ENCODE measurements at regions of chr12 and their contacts with region 1.

Region 1: GRCh38 chr12:110647631-110648040 is 33.7 kb downstream of the TCTN1 start:
- DNase-seq: peak; percentile 56
- ATAC-seq: peak; percentile 82
- H3K4me3 Mint-ChIP-seq: peak overlapping the region; percentile 45
- H3K27ac Mint-ChIP-seq: peak overlapping the region; percentile 89
- H3K4me1 Mint-ChIP-seq: peaks cover 96% of the 10 kb centered on the region
- H3K27me3 Mint-ChIP-seq: no peaks in the 10 kb centered on the region
- CTCF ChIP-seq: no peak

Region 2: DNA sequence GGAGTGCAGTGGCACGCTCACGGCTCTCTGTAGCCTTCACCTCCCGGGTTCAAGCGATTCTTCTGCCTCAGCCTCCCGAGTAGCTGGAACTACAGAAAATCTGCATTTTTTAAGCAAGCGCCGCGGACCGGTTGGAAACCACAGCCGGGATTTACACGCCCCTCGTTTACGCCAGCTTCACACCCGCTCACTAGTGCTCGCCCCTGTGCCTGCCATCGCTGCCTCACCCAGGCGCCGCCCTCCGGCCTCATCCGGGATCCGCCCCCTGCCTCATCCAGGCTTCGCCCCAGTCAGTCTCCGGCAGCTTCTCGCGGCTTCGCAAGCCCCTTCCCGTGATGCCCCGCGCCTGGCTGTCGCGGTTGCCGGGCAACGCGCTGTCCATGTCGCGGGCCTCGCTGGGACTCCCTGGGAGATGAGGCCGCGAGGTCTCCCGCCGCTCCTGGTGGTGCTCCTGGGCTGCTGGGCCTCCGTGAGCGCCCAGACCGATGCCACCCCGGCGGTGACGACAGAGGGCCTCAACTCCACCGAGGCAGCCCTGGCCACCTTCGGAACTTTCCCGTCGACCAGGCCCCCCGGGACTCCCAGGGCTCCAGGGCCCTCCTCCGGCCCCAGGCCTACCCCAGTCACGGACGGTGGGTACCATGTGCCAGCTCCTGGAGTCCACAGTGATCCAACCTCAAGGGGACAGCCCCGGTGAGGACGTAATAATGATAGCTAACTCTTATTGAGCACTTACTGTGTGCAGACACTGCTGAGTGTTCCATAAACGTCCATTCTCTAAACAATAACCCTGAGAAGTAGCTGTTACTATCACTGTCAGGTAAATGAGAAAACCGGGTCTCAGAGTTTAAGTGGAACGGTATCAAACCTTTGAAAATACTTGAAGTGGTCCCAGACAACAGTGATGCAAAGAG is 33.6 kb before region 1 on chr12 and contains the start of gene TCTN1:
- CTCF ChIA-PET with region 1: interaction called, 3 read pairs
- POLR2A ChIA-PET with region 1: interaction called, 20 read pairs
- intact Hi-C with region 1: loop called (anchors 5 kb)
- DNase-seq: peak; percentile 95
- ATAC-seq: peak; percentile 98
- H3K4me3 Mint-ChIP-seq: peak within 1 kb of the TSS; percentile 89
- H3K27ac Mint-ChIP-seq: peak within 1 kb of the TSS; percentile 94
- H3K4me1 Mint-ChIP-seq: peaks cover 57% of the 10 kb centered on the region
- H3K27me3 Mint-ChIP-seq: no peaks in the 10 kb centered on the region
- CTCF ChIP-seq: no peak
- total RNA-seq, gene TCTN1: 22.4 and 29.5 TPM in 2 replicates

Region 3: DNA sequence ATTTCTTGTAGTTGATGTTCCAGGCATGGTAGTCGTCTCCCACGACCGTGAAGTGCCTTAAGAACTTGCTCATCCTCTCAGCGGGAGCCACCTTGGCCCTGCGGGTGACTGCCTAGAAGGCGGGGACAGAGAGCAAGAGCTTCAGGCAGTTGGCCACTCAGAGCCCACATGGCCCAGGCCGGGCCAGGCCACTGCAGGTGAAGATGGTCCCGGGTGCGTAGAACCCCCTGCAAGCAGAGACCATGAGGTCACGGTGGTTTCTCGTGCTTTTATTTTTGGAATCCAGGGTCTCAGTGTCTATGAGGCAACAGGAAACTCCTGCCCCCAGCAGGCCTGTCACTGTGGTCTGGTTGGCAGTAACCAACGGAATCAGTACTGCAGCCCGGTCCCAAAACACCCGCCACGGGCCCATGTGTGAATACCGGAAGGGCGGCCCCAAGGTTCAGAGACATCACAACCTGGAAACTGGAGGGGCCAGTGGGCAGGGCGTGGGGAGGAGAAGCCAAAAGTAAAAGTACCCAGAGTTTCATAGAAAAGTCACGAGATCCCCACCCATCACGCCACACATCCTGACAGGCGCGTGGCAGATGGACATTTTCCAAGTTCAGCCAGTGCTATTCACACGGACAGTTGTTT is 13.8 kb after region 1 on chr12:
- CTCF ChIA-PET with region 1: interaction called, 3 read pairs
- POLR2A ChIA-PET with region 1: interaction called, 37 read pairs
- intact Hi-C with region 1: loop called (anchors 1 kb)
- DNase-seq: peak; percentile 73
- ATAC-seq: peak; percentile 87
- H3K4me3 Mint-ChIP-seq: peak overlapping the region; percentile 82
- H3K27ac Mint-ChIP-seq: peak overlapping the region; percentile 97
- H3K4me1 Mint-ChIP-seq: peaks cover 89% of the 10 kb centered on the region
- H3K27me3 Mint-ChIP-seq: no peaks in the 10 kb centered on the region
- CTCF ChIP-seq: no peak

Region 4: DNA sequence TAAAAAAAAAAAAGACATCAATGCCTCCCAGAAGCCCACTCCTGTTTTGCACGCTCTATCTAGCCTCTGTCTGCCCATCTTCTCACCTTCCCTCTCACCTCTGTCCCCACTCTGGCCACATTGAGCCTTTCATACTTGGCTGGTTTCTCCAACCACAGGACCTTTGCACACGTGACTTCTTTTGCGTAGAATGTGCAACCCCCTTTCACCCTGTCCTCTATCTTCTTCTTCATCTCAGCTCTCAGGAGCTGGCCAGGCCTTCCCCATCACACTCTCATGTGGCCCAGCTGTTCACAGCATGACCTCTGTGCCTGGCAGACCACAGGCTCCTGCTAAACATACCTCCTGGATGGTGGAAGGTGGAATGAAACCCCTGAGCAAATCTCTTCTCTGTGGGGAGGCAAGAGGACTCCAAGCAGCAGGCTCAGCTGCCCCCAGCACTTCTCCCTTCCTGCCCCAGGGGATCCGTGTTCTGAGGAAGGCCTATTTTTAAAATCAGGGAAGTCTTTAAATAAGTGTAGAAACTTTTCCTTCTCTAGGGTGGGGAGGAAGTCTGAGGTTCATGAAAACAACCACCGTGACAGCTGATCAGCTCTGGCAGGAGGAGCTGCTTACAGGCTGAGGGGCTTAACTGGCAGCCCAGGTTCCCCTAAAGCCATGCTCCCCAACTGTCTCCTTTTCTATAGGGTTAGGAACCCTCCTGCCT is 29.7 kb after region 1 on chr12:
- CTCF ChIA-PET with region 1: no interaction called
- POLR2A ChIA-PET with region 1: interaction called, 27 read pairs
- intact Hi-C with region 1: no loop called
- DNase-seq: peak; percentile 50
- ATAC-seq: peak; percentile 64
- H3K4me3 Mint-ChIP-seq: peak overlapping the region; percentile 78
- H3K27ac Mint-ChIP-seq: peak overlapping the region; percentile 90
- H3K4me1 Mint-ChIP-seq: peaks cover 96% of the 10 kb centered on the region
- H3K27me3 Mint-ChIP-seq: no peaks in the 10 kb centered on the region
- CTCF ChIP-seq: no peak

Region 5: GRCh38 chr12:110957652-110958051 is 310.0 kb after region 1 on chr12:
- CTCF ChIA-PET with region 1: no interaction called
- POLR2A ChIA-PET with region 1: no interaction called
- intact Hi-C with region 1: no loop called
- DNase-seq: no peak
- ATAC-seq: no peak
- H3K4me3 Mint-ChIP-seq: no peak overlapping the region
- H3K27ac Mint-ChIP-seq: no peak overlapping the region
- H3K4me1 Mint-ChIP-seq: no peaks in the 10 kb centered on the region
- H3K27me3 Mint-ChIP-seq: peaks cover 23% of the 10 kb centered on the region
- CTCF ChIP-seq: no peak

Measured in activated B cell treated with CpG ODN at 0.5 μM for 24 hours (primary cell).